Heart right ventricle (tissue), 16 donors: ENCODE measurements at regions of chr4 and their contacts with region 1.

Region 1: GRCh38 chr4:158809611-158810486 is 41.0 kb downstream of the FNIP2 start:
- DNase-seq: peak in 1 of 2 donors; percentile 43
- ATAC-seq: peak; percentile 42 to 73 (median 62)
- H3K4me3 ChIP-seq: peak overlapping the region in 6 of 10 donors; percentile 1 to 32 (median 6)
- H3K27ac ChIP-seq: peak overlapping the region; percentile 55 to 89 (median 80)
- H3K4me1 ChIP-seq: peaks cover 15 to 97% (median 81%) of the 10 kb centered on the region in 9 donors
- H3K27me3 ChIP-seq: no peaks in the 10 kb centered on the region
- CTCF ChIP-seq: no peak

Region 2: GRCh38 chr4:158826057-158826456 is 16.2 kb after region 1 on chr4:
- intact Hi-C with region 1: loop called in 1 of 10 experiments (anchors 2 kb)
- DNase-seq: no peak
- ATAC-seq: peak; percentile 30 to 79 (median 55)
- H3K4me3 ChIP-seq: no peak overlapping the region
- H3K27ac ChIP-seq: peak overlapping the region; percentile 40 to 83 (median 68)
- H3K4me1 ChIP-seq: peaks cover 27 to 76% (median 63%) of the 10 kb centered on the region in 9 donors
- H3K27me3 ChIP-seq: no peaks in the 10 kb centered on the region
- CTCF ChIP-seq: no peak